Endothelial cell of umbilical vein (primary cell): ENCODE measurements at regions of chr5 and their contacts with region 1.

Region 1: GRCh38 chr5:160119142-160119904 is at the start of gene PWWP2A:
- DNase-seq: peak; percentile 100
- H3K4me3 ChIP-seq: peak within 1 kb of the TSS; percentile 71 to 88 (median 73)
- H3K27ac ChIP-seq: peak within 1 kb of the TSS; percentile 56
- H3K4me1 ChIP-seq: peaks cover 6% of the 10 kb centered on the region
- H3K27me3 ChIP-seq: peaks cover 2 to 4% of the 10 kb centered on the region in 2 experiments
- CTCF ChIP-seq: peak; percentile 14 to 21
- POLR2A ChIP-seq: peak; percentile 86
- total RNA-seq, gene PWWP2A: 17.3 and 19.3 TPM in 2 replicates

Region 2: DNA sequence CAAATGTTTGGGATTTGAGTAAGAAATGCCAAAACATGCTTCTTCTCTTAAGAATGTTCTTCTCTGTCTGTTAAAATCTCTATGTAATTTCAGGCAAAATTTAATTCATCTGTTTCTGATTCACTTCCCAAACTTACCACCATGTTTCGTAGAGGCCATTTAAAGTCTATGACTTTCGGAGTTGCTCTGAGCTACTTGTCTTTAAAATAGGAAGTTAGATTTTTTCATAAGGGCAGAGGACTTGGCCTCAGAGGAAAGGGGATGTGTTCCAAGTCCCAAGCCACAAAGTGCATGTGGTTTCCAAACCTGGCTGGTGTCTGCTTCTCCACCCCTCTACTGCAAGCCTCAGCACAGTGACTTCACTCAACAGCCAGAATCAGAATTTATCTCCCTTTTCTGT is 314.3 kb before region 1 on chr5:
- CTCF ChIA-PET with region 1: no interaction called
- POLR2A ChIA-PET with region 1: no interaction called
- dilution Hi-C with region 1: no loop called
- intact Hi-C with region 1: no loop called
- DNase-seq: no peak
- H3K4me3 ChIP-seq: no peak overlapping the region
- H3K27ac ChIP-seq: no peak overlapping the region
- H3K4me1 ChIP-seq: no peaks in the 10 kb centered on the region
- H3K27me3 ChIP-seq: no peaks in the 10 kb centered on the region
- CTCF ChIP-seq: no peak
- POLR2A ChIP-seq: no peak

Region 3: GRCh38 chr5:160082614-160083500 is 36.5 kb before region 1 on chr5:
- CTCF ChIA-PET with region 1: interaction called, 21 read pairs
- POLR2A ChIA-PET with region 1: no interaction called
- dilution Hi-C with region 1: no loop called
- intact Hi-C with region 1: loop called (anchors 1 kb)
- DNase-seq: peak; percentile 79
- H3K4me3 ChIP-seq: peak overlapping the region in 1 of 3 experiments; percentile 41
- H3K27ac ChIP-seq: peak overlapping the region; percentile 63
- H3K4me1 ChIP-seq: peaks cover 23% of the 10 kb centered on the region
- H3K27me3 ChIP-seq: no peaks in the 10 kb centered on the region
- CTCF ChIP-seq: no peak
- POLR2A ChIP-seq: no peak

Region 4: DNA sequence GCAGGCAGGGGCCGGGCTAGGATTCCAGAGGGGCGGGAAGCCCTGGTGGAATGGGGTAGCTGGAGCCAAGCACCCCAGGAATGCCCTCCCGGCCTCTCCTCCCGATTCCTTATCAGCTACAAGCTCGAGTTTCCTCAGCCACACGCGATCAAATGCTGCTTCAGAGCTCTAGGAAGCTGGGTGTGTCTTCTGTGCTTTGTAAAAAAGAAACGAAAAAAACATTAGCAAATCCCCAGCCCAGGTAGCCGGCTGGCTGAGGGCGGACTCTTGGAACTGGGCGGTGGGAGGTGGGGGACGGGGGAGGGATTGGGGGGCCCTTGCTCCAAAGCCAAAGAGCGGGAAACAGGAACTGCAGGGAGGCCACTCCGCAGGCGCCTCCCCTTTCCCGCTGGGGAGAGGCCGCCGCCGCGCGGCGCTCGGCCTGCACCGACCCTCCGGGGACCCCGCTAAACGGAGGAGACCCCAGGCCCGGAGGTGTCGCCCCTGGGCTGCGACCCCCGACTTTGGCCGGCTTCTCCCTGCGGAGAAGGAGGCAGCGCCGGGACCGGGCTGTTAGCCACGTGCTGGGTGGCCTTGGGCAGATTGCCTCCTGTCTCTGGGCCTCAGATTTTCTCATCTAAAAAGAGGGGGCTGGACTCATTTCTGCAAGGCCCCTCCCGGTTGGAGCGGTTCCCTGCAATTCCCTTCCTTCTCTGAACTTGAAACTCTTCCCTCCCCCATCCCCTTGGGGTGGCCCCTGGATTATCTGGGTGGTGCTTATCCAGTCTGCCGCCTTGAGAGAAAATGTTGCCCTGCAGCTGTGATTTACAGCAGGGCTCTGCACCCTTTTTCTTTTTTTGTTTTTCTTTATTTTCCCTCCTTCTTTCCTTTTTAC is 69.1 kb after region 1 on chr5:
- CTCF ChIA-PET with region 1: no interaction called
- POLR2A ChIA-PET with region 1: no interaction called
- dilution Hi-C with region 1: no loop called
- intact Hi-C with region 1: loop called (anchors 1 kb)
- DNase-seq: peak; percentile 32
- H3K4me3 ChIP-seq: peak overlapping the region; percentile 5 to 47 (median 33)
- H3K27ac ChIP-seq: peak overlapping the region; percentile 44
- H3K4me1 ChIP-seq: peaks cover 8% of the 10 kb centered on the region
- H3K27me3 ChIP-seq: no peaks in the 10 kb centered on the region
- CTCF ChIP-seq: peak in 1 of 2 donors; percentile 3
- POLR2A ChIP-seq: no peak

Region 5: DNA sequence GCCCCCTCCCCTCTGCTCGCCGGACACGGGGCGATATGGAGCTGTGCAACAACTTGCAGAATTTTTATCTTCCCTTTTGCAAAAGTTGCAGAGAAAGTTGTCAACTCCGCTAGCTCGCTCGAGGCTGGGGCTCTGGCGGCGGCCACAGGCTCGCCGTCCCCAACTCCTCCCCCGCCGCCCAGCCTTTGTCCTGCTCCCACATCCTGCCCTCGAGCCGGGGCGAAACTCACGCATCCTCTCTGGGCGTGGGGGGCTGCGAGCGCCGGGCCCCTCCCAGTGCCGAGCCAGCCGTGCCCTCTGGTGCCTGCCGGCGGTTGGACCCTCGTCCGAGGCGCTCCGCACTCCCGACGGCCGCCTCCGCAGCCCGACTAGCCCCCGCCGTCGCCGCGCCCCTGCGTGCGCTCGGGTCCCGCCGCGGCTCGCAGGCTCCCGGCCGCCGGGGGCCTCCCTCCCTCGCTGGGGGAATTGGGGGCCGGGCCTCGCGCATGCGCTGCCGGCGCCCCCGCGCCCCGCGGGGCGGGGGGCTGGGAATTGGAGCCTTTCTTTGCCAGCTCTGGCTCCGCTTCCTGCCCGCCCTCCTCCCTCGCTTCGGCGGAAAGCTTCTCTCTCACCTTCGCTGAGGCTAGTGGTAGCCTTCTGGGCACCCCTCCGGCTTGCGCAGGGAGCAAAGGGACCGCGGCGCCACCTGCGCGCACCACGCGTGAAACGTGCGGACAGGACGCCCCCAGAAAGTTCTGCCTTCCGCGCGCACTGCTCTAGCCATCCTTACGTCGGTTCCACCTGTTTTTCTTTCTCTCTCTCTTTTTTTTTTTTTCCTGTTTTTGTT is 193.0 kb after region 1 on chr5 and contains the start of gene CCNJL:
- CTCF ChIA-PET with region 1: no interaction called
- POLR2A ChIA-PET with region 1: no interaction called
- dilution Hi-C with region 1: no loop called
- intact Hi-C with region 1: loop called (anchors 2 kb)
- DNase-seq: peak; percentile 78
- H3K4me3 ChIP-seq: peak within 1 kb of the TSS; percentile 23 to 80 (median 76)
- H3K27ac ChIP-seq: peak within 1 kb of the TSS; percentile 29
- H3K4me1 ChIP-seq: peaks cover 28% of the 10 kb centered on the region
- H3K27me3 ChIP-seq: no peaks in the 10 kb centered on the region
- CTCF ChIP-seq: no peak
- POLR2A ChIP-seq: peak; percentile 85
- total RNA-seq, gene CCNJL: 17.4 and 20.0 TPM in 2 replicates

Region 6: GRCh38 chr5:160418561-160419457 is 299.5 kb after region 1 on chr5 and contains the start of gene SLU7:
- CTCF ChIA-PET with region 1: no interaction called
- POLR2A ChIA-PET with region 1: interaction called, 4 read pairs
- dilution Hi-C with region 1: no loop called
- intact Hi-C with region 1: loop called (anchors 2 kb)
- DNase-seq: peak; percentile 98
- H3K4me3 ChIP-seq: peak within 1 kb of the TSS; percentile 70 to 100 (median 91)
- H3K27ac ChIP-seq: peak within 1 kb of the TSS; percentile 73
- H3K4me1 ChIP-seq: peaks cover 39% of the 10 kb centered on the region
- H3K27me3 ChIP-seq: no peaks in the 10 kb centered on the region
- CTCF ChIP-seq: no peak
- POLR2A ChIP-seq: no peak
- total RNA-seq, gene SLU7: 42.7 and 48.2 TPM in 2 replicates